Activated CD4-positive, alpha-beta T cell treated with anti-CD3 and anti-CD28 coated beads, Interleukin-2, amount 10 ng/mL, durations not matched to agents 24 days and 14 days (primary cell): ENCODE measurements at regions of chr6 and their contacts with region 1.

Region 1: GRCh38 chr6:25166955-25167748 is 112.0 kb upstream of the CARMIL1 start:
- DNase-seq: no peak
- H3K4me3 Mint-ChIP-seq: peak overlapping the region; percentile 86
- H3K27ac Mint-ChIP-seq: peak overlapping the region; percentile 92
- H3K4me1 Mint-ChIP-seq: peaks cover 67% of the 10 kb centered on the region
- H3K27me3 Mint-ChIP-seq: no peaks in the 10 kb centered on the region

Region 2: GRCh38 chr6:25147223-25147622 is 19.9 kb before region 1 on chr6:
- intact Hi-C with region 1: loop called (anchors 1 kb)
- DNase-seq: no peak
- H3K4me3 Mint-ChIP-seq: peak overlapping the region; percentile 53
- H3K27ac Mint-ChIP-seq: peak overlapping the region; percentile 79
- H3K4me1 Mint-ChIP-seq: peaks cover 63% of the 10 kb centered on the region
- H3K27me3 Mint-ChIP-seq: no peaks in the 10 kb centered on the region

Region 3: DNA sequence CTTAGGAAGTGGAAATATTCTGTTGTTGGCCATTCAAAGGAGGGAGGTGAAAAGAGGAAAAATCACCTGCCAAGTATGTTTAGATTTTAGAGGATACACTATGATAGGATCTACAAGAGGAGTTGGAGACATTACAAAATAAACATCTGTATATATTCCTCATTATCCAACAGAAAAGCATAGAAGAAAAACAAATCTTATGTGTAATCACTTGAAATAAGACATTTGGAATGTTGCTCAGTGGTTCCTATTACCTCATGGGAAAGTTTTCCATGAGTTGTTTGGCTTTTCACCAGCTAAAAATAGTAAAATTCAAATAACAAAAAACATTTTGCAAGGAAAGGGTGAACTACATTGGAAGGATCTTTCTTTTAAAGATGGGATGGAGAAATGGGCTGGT is 35.4 kb after region 1 on chr6:
- intact Hi-C with region 1: no loop called
- DNase-seq: no peak
- H3K4me3 Mint-ChIP-seq: no peak overlapping the region
- H3K27ac Mint-ChIP-seq: no peak overlapping the region
- H3K4me1 Mint-ChIP-seq: no peaks in the 10 kb centered on the region
- H3K27me3 Mint-ChIP-seq: peaks cover 15% of the 10 kb centered on the region